CD4-positive, alpha-beta T cell (primary cell): ENCODE measurements at regions of chr16 and their contacts with region 1.

Region 1: DNA sequence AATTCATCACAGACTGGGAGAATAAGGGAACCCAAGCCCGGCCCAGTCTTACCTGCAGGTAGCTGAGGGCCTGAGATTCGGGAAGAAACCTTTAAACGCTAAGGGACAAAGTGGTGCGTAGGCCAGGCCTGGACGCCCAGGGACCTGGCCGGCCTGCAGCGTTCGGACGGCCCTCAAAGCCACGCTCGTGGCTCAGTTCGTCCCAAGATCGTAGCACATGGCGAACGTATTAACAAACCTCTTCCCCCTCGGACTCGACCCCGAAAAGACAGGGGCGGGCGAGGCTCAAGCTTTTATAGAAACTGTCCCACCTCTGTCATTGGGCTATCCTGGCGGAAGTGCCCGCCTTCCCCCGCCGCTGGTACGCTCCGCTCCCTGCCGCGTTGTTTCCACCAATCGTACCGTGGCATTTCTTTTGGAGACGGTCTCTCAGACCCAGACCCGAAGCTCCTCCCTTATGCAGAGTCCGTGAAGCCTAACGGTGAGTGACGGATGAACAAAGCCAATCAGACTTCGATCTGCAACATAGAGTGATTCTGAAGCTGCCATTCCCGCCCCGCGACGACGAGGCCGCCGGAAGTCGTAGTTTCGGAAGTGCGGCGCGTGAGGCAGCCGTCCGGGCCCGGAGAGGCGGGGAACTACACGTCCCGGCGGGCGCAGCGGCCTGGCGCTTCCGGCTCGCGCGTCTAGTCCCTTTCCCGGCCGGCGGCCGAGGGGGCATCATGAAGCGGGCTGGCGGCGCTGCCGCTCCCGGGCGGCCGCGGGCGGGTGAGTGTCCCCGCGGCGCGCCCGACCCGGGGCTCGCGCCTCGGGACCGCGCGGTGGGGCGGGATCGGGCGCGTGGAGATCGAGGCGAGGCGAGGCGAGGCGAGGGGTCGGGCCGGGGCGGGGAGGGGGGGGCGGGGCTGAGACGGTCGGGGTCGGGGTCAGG is at the start of gene TRAF7:
- DNase-seq: peak; percentile 93 to 100 (median 95)
- ATAC-seq: peak; percentile 90
- H3K4me3 ChIP-seq: peak within 1 kb of the TSS; percentile 83
- H3K4me3 Mint-ChIP-seq: peak within 1 kb of the TSS; percentile 94
- H3K27ac ChIP-seq: peak within 1 kb of the TSS; percentile 64 to 68
- H3K27ac Mint-ChIP-seq: peak within 1 kb of the TSS; percentile 75
- H3K4me1 ChIP-seq: peaks cover 79% of the 10 kb centered on the region
- H3K4me1 Mint-ChIP-seq: peaks cover 51% of the 10 kb centered on the region
- H3K27me3 ChIP-seq: no peaks in the 10 kb centered on the region
- H3K27me3 Mint-ChIP-seq: no peaks in the 10 kb centered on the region
- CTCF ChIP-seq: no peak
- total RNA-seq, gene TRAF7: 19.9 to 24.0 TPM

Region 2: GRCh38 chr16:1782352-1783091 is 372.8 kb before region 1 on chr16 and contains the starts of genes NUBP2 and SPSB3:
- CTCF ChIA-PET with region 1: no interaction called
- POLR2A ChIA-PET with region 1: interaction called, 24 read pairs
- intact Hi-C with region 1: no loop called
- DNase-seq: peak; percentile 93 to 100 (median 97)
- ATAC-seq: peak; percentile 84
- H3K4me3 ChIP-seq: peak within 1 kb of the TSS; percentile 88
- H3K4me3 Mint-ChIP-seq: peak within 1 kb of the TSS; percentile 95
- H3K27ac ChIP-seq: peak within 1 kb of the TSS; percentile 69 to 74
- H3K27ac Mint-ChIP-seq: peak within 1 kb of the TSS; percentile 96
- H3K4me1 ChIP-seq: peaks cover 61% of the 10 kb centered on the region
- H3K4me1 Mint-ChIP-seq: peaks cover 26% of the 10 kb centered on the region
- H3K27me3 ChIP-seq: no peaks in the 10 kb centered on the region
- H3K27me3 Mint-ChIP-seq: no peaks in the 10 kb centered on the region
- CTCF ChIP-seq: no peak
- total RNA-seq, gene NUBP2: 36.4 to 38.1 TPM
- total RNA-seq, gene SPSB3: 86.3 to 87.6 TPM

Region 3: GRCh38 chr16:1942810-1943726 is 212.3 kb before region 1 on chr16 and contains the start of gene MSRB1:
- CTCF ChIA-PET with region 1: no interaction called
- POLR2A ChIA-PET with region 1: interaction called, 10 read pairs
- intact Hi-C with region 1: no loop called
- DNase-seq: peak; percentile 97 to 100 (median 99)
- ATAC-seq: peak; percentile 99
- H3K4me3 ChIP-seq: peak within 1 kb of the TSS; percentile 92
- H3K4me3 Mint-ChIP-seq: peak within 1 kb of the TSS; percentile 93
- H3K27ac ChIP-seq: peak within 1 kb of the TSS; percentile 40 to 43
- H3K27ac Mint-ChIP-seq: peak within 1 kb of the TSS; percentile 47
- H3K4me1 ChIP-seq: peaks cover 28% of the 10 kb centered on the region
- H3K4me1 Mint-ChIP-seq: peaks cover 18% of the 10 kb centered on the region
- H3K27me3 ChIP-seq: no peaks in the 10 kb centered on the region
- H3K27me3 Mint-ChIP-seq: no peaks in the 10 kb centered on the region
- CTCF ChIP-seq: no peak
- total RNA-seq, gene MSRB1: 2.3 to 2.4 TPM

Region 4: GRCh38 chr16:1971796-1972489 is 183.4 kb before region 1 on chr16 and contains the start of gene TBL3:
- CTCF ChIA-PET with region 1: no interaction called
- POLR2A ChIA-PET with region 1: interaction called, 16 read pairs
- intact Hi-C with region 1: no loop called
- DNase-seq: peak; percentile 92 to 98 (median 96)
- ATAC-seq: peak; percentile 97
- H3K4me3 ChIP-seq: peak within 1 kb of the TSS; percentile 73
- H3K4me3 Mint-ChIP-seq: peak within 1 kb of the TSS; percentile 97
- H3K27ac ChIP-seq: peak within 1 kb of the TSS; percentile 87 to 92
- H3K27ac Mint-ChIP-seq: peak within 1 kb of the TSS; percentile 97
- H3K4me1 ChIP-seq: peaks cover 36% of the 10 kb centered on the region
- H3K4me1 Mint-ChIP-seq: peaks cover 20% of the 10 kb centered on the region
- H3K27me3 ChIP-seq: no peaks in the 10 kb centered on the region
- H3K27me3 Mint-ChIP-seq: no peaks in the 10 kb centered on the region
- CTCF ChIP-seq: no peak
- total RNA-seq, gene TBL3: 12.7 to 15.5 TPM

Region 5: GRCh38 chr16:2009789-2010510 is 145.4 kb before region 1 on chr16 and contains the start of gene ZNF598:
- CTCF ChIA-PET with region 1: no interaction called
- POLR2A ChIA-PET with region 1: interaction called, 30 read pairs
- intact Hi-C with region 1: no loop called
- DNase-seq: peak; percentile 47 to 93 (median 75)
- ATAC-seq: peak; percentile 91
- H3K4me3 ChIP-seq: peak within 1 kb of the TSS; percentile 68
- H3K4me3 Mint-ChIP-seq: peak within 1 kb of the TSS; percentile 93
- H3K27ac ChIP-seq: peak within 1 kb of the TSS; percentile 78 to 89
- H3K27ac Mint-ChIP-seq: peak within 1 kb of the TSS; percentile 92
- H3K4me1 ChIP-seq: peaks cover 52% of the 10 kb centered on the region
- H3K4me1 Mint-ChIP-seq: peaks cover 40% of the 10 kb centered on the region
- H3K27me3 ChIP-seq: no peaks in the 10 kb centered on the region
- H3K27me3 Mint-ChIP-seq: no peaks in the 10 kb centered on the region
- CTCF ChIP-seq: no peak
- total RNA-seq, gene ZNF598: 39.7 to 43.6 TPM

Region 6: GRCh38 chr16:2205104-2205966 is 50.0 kb after region 1 on chr16 and contains the start of gene MLST8:
- CTCF ChIA-PET with region 1: no interaction called
- POLR2A ChIA-PET with region 1: interaction called, 5 read pairs
- intact Hi-C with region 1: loop called in 1 of 2 experiments (anchors 2 kb)
- DNase-seq: peak; percentile 82 to 98 (median 92)
- ATAC-seq: peak; percentile 82
- H3K4me3 ChIP-seq: peak within 1 kb of the TSS; percentile 59
- H3K4me3 Mint-ChIP-seq: peak within 1 kb of the TSS; percentile 90
- H3K27ac ChIP-seq: peak within 1 kb of the TSS; percentile 90 to 94
- H3K27ac Mint-ChIP-seq: peak within 1 kb of the TSS; percentile 79
- H3K4me1 ChIP-seq: peaks cover 23% of the 10 kb centered on the region
- H3K4me1 Mint-ChIP-seq: peaks cover 13% of the 10 kb centered on the region
- H3K27me3 ChIP-seq: no peaks in the 10 kb centered on the region
- H3K27me3 Mint-ChIP-seq: no peaks in the 10 kb centered on the region
- CTCF ChIP-seq: peak; percentile 26
- total RNA-seq, gene MLST8: 22.9 to 26.4 TPM

Region 7: GRCh38 chr16:2513405-2514322 is 358.3 kb after region 1 on chr16 and contains the start of gene ATP6V0C:
- CTCF ChIA-PET with region 1: no interaction called
- POLR2A ChIA-PET with region 1: interaction called, 12 read pairs
- intact Hi-C with region 1: no loop called
- DNase-seq: peak; percentile 84 to 96 (median 90)
- ATAC-seq: peak; percentile 88
- H3K4me3 ChIP-seq: peak within 1 kb of the TSS; percentile 71
- H3K4me3 Mint-ChIP-seq: peak within 1 kb of the TSS; percentile 95
- H3K27ac ChIP-seq: peak within 1 kb of the TSS; percentile 91 to 96
- H3K27ac Mint-ChIP-seq: peak within 1 kb of the TSS; percentile 100
- H3K4me1 ChIP-seq: peaks cover 53% of the 10 kb centered on the region
- H3K4me1 Mint-ChIP-seq: peaks cover 60% of the 10 kb centered on the region
- H3K27me3 ChIP-seq: no peaks in the 10 kb centered on the region
- H3K27me3 Mint-ChIP-seq: no peaks in the 10 kb centered on the region
- CTCF ChIP-seq: no peak
- total RNA-seq, gene ATP6V0C: 224 to 234 TPM